Natural killer cell (primary cell): ENCODE measurements at regions of chr14 and their contacts with region 1.

Region 1: GRCh38 chr14:81269100-81269978 is 48.6 kb upstream of the GTF2A1 start:
- DNase-seq: peak in 1 of 2 donors; percentile 62
- ATAC-seq: peak; percentile 54 to 74 (median 71)
- H3K4me3 ChIP-seq: no peak overlapping the region
- H3K4me3 Mint-ChIP-seq: no peak overlapping the region
- H3K27ac ChIP-seq: no peak overlapping the region
- H3K27ac Mint-ChIP-seq: no peak overlapping the region
- H3K4me1 ChIP-seq: no peaks in the 10 kb centered on the region
- H3K4me1 Mint-ChIP-seq: no peaks in the 10 kb centered on the region
- H3K27me3 ChIP-seq: no peaks in the 10 kb centered on the region
- H3K27me3 Mint-ChIP-seq: peaks cover 2 to 18% of the 10 kb centered on the region in 2 donors
- CTCF ChIP-seq: peak; percentile 60

Region 2: DNA sequence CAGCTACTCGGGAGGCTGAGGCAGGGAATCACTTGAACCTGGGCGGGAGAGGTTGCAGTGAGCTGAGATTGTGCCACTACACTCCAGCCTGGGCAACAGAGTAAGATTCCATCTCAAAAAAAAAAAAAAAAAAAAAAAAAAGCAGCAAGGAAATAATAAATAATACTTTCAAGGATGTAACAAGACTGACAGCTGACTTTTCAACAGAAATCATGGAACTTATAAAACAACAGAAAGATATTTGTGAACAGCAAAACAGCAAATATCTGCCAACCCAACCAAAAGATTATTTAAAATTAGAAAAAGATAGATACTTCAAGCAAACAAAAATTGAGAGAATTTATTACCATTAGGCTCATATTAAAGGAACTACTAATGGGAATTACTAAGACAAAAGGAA is 198.8 kb before region 1 on chr14:
- intact Hi-C with region 1: no loop called
- DNase-seq: no peak
- ATAC-seq: no peak
- H3K4me3 ChIP-seq: no peak overlapping the region
- H3K4me3 Mint-ChIP-seq: no peak overlapping the region
- H3K27ac ChIP-seq: no peak overlapping the region
- H3K27ac Mint-ChIP-seq: no peak overlapping the region
- H3K4me1 ChIP-seq: no peaks in the 10 kb centered on the region
- H3K4me1 Mint-ChIP-seq: no peaks in the 10 kb centered on the region
- H3K27me3 ChIP-seq: peaks cover 2% of the 10 kb centered on the region
- H3K27me3 Mint-ChIP-seq: peaks cover 0 to 4% of the 10 kb centered on the region in 2 donors
- CTCF ChIP-seq: no peak

Region 3: DNA sequence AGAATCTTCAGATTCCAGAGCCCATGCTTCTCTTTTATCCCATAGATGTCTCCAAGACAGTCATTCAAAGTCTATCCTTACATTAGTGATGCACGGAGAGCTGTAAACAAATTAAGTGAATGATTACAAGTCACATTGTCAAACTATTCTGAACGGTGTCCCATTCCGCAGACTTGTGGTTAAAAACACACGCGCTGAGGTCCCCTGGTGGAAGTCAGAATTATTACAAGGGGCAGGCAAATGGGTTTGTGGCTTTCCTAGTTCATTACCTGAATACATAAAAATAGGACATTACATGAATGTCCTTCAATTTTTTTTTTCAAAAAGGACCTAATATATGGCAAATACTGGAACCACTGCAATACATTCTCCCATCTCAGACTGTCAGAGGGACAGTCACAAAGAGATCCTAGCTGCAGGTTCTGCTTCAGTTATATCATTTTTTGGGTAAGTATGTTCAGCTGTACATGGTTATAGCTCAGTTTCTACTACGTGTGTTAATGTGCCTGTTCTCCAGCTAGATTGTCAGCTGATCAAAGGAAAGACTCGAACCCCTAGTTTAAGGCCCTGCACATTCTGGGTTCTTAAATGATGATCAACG is 183.9 kb after region 1 on chr14:
- intact Hi-C with region 1: loop called (anchors 1 kb)
- DNase-seq: peak in 1 of 2 donors; percentile 73
- ATAC-seq: peak; percentile 69 to 89 (median 86)
- H3K4me3 ChIP-seq: no peak overlapping the region
- H3K4me3 Mint-ChIP-seq: no peak overlapping the region
- H3K27ac ChIP-seq: no peak overlapping the region
- H3K27ac Mint-ChIP-seq: no peak overlapping the region
- H3K4me1 ChIP-seq: no peaks in the 10 kb centered on the region
- H3K4me1 Mint-ChIP-seq: peaks cover 5 to 8% of the 10 kb centered on the region in 2 donors
- H3K27me3 ChIP-seq: no peaks in the 10 kb centered on the region
- H3K27me3 Mint-ChIP-seq: peaks cover 2 to 5% of the 10 kb centered on the region in 2 donors
- CTCF ChIP-seq: peak; percentile 76

Region 4: GRCh38 chr14:81464247-81465002 is 195.1 kb after region 1 on chr14:
- intact Hi-C with region 1: loop called (anchors 1 kb)
- DNase-seq: peak in 1 of 2 donors; percentile 88
- ATAC-seq: peak; percentile 80 to 85 (median 84)
- H3K4me3 ChIP-seq: peak overlapping the region; percentile 79
- H3K4me3 Mint-ChIP-seq: peak overlapping the region; percentile 90
- H3K27ac ChIP-seq: peak overlapping the region; percentile 82
- H3K27ac Mint-ChIP-seq: peak overlapping the region; percentile 77 to 87
- H3K4me1 ChIP-seq: peaks cover 2% of the 10 kb centered on the region
- H3K4me1 Mint-ChIP-seq: peaks cover 0 to 7% of the 10 kb centered on the region in 2 donors
- H3K27me3 ChIP-seq: no peaks in the 10 kb centered on the region
- H3K27me3 Mint-ChIP-seq: no peaks in the 10 kb centered on the region
- CTCF ChIP-seq: peak; percentile 84